Activated CD4-positive, alpha-beta memory T cell treated with anti-CD3 and anti-CD28 coated beads for 36 hours (primary cell): ENCODE measurements at regions of chr20 and their contacts with region 1.

Region 1: DNA sequence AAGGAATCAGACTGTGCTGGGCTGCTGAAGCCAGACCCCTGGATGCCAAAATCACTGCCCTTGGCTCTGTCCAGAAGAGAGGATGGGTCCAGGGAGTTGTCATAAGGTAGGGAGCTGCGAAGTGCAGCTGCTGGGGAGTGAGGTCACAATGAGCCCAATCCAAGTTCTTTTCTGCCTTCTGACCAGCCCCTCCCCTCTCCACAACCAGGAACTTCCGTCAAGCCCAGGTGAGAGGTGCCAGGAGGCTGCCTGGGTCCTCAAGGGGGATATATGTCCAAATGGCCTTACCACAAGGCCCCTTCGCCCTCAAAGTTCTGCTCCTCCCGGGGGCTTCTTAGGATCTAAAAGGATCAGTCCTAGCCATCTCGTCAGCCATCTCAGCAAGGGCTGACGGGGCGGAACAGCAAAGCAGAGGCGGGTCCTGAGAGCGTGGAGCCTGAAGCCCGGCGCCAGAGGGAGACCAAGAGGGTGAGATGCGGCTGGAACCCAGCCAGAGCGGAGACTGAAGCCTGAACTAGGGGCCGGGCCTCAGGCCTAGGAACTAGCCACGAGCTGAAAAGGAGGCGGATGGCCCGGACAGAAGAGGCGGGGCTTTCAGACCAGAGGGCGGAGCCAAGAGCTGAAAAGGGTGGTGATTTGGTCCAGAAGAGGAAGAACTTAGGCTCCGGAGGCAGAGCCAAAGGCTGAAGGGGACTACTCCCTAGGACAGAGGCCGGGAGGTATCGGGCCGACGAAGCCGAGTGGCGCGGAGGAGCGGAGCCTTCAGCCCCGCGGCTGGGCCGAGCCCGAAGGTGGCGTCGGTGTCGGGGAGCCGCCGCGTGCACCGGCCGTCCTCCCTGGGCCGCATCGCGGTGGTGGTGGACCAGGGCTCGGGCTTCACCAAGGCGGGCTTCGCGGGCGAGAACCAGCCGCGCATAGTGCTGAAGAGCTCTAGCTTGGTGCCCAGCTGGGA is at the start of gene ACTL10:
- DNase-seq: peak; percentile 93
- H3K4me3 Mint-ChIP-seq: peak within 1 kb of the TSS; percentile 80
- H3K27ac Mint-ChIP-seq: peak within 1 kb of the TSS; percentile 90
- H3K4me1 Mint-ChIP-seq: peaks cover 38% of the 10 kb centered on the region
- H3K27me3 Mint-ChIP-seq: no peaks in the 10 kb centered on the region
- total RNA-seq, gene ACTL10: 1.8 to 2.3 TPM

Region 2: GRCh38 chr20:33443512-33444239 is 222.9 kb before region 1 on chr20 and contains the start of gene SNTA1:
- CTCF ChIA-PET with region 1: interaction called, 17 read pairs
- POLR2A ChIA-PET with region 1: interaction called, 9 read pairs
- intact Hi-C with region 1: loop called (anchors 5 kb)
- DNase-seq: peak; percentile 94
- H3K4me3 Mint-ChIP-seq: peak within 1 kb of the TSS; percentile 84
- H3K27ac Mint-ChIP-seq: peak within 1 kb of the TSS; percentile 81
- H3K4me1 Mint-ChIP-seq: peaks cover 17% of the 10 kb centered on the region
- H3K27me3 Mint-ChIP-seq: no peaks in the 10 kb centered on the region
- total RNA-seq, gene SNTA1: 5.6 to 5.7 TPM

Region 3: DNA sequence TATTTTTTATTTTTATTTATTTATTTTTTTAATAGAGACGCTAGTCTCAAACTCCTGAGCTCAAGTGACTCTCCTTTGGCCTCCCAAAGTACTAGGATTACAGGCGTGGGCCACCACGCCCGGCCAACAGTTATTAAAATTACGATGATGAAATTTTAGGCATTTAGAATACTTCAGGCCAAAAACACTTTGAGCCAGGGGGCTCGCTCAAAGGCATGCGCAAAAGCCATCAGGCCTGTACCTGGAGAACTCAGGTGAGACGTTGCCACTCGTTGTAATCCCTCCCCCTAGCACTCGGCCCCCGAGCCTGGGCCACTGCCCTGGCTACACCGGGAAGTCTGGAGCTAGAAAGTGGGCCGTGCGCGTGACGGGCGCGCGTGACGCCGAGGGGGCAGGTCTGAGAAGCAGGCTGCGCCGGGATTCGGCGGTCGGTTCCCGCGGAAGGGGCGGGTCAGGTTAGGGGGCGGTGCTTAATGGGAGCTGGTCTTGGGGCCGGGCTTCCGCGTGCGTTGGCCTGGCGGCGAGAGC is 177.0 kb before region 1 on chr20:
- CTCF ChIA-PET with region 1: interaction called, 37 read pairs
- POLR2A ChIA-PET with region 1: interaction called, 20 read pairs
- intact Hi-C with region 1: no loop called
- DNase-seq: peak; percentile 100
- H3K4me3 Mint-ChIP-seq: peak overlapping the region; percentile 83
- H3K27ac Mint-ChIP-seq: peak overlapping the region; percentile 77
- H3K4me1 Mint-ChIP-seq: peaks cover 12% of the 10 kb centered on the region
- H3K27me3 Mint-ChIP-seq: no peaks in the 10 kb centered on the region

Region 4: DNA sequence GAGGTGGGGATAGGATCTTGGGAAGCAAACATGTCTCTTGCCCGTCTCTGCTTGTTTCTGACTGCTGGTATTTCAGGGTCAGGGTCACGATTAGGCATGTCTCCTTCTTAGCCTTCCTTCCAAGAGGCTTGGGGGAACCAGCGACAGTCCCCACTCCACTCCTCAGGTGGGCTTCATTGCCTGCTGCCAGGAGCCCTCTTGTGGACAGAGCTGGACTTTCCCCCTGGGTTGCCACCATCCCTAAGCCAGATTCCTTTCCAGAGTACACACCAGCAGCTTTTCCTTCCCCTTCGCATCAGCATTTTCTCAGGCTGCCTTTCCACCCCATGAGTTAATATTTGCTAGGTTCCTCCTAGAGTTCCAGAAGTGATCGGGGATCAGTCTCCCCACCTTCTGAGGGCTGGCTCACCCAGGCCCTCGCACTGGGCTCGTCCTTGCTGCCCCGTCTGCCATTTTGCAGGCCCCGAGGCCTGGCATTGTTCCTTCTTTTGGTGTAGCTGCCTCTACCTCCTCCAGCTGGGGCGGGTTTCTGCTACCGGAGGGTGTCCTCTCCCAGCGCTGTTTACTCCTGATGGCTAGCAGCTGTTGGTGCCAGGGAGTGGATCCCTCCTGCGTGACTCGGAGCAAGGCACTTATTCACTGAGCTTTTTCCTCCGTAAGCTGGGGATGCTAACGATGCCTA is 13.2 kb before region 1 on chr20:
- CTCF ChIA-PET with region 1: interaction called, 14 read pairs
- POLR2A ChIA-PET with region 1: interaction called, 18 read pairs
- intact Hi-C with region 1: loop called (anchors 1 kb)
- DNase-seq: peak; percentile 60
- H3K4me3 Mint-ChIP-seq: no peak overlapping the region
- H3K27ac Mint-ChIP-seq: peak overlapping the region; percentile 80
- H3K4me1 Mint-ChIP-seq: peaks cover 47% of the 10 kb centered on the region
- H3K27me3 Mint-ChIP-seq: no peaks in the 10 kb centered on the region

Region 5: DNA sequence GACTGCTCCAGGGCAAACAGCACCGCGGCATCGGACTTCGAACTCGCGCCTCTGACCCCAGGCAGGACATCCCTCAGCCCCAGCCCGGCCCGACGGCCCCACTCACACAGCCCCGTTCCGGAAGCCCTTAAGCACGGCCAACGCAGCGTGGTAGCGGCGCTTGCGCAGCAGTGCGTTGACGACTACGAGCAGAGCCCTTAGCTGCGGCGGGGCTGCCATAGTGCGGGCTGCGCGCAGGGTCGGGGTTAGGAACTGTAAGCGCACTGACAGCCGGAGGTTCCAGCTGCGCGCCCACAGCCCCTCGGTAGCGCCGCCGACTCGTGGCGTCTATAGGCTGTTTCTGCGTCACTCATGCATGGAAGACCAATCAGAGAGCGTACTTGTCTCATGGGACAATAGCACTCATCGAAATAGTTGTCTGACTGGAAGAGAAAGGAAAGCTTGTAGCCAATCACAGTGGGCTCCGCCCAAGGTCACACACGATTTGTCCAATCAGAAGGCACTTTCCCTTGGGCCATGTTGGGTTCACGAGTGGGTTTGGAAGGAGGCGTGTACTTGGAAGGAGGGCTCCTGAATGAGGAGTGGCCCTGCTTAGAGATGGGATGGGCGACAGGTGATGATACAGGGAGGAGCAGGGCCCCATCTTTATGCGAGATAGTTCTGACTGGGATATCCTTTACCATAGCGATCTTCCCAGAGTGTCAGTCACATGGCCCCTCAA is 53.6 kb after region 1 on chr20 and contains the start of gene PXMP4:
- CTCF ChIA-PET with region 1: interaction called, 14 read pairs
- POLR2A ChIA-PET with region 1: interaction called, 3 read pairs
- intact Hi-C with region 1: no loop called
- DNase-seq: peak; percentile 95
- H3K4me3 Mint-ChIP-seq: peak within 1 kb of the TSS; percentile 95
- H3K27ac Mint-ChIP-seq: peak within 1 kb of the TSS; percentile 75
- H3K4me1 Mint-ChIP-seq: peaks cover 23% of the 10 kb centered on the region
- H3K27me3 Mint-ChIP-seq: no peaks in the 10 kb centered on the region
- total RNA-seq, gene PXMP4: 8.7 to 11.6 TPM